Heart right ventricle (tissue), 16 donors: ENCODE measurements at regions of chr9 and their contacts with region 1.

Region 1: GRCh38 chr9:6584881-6585597 is 60.5 kb downstream of the GLDC start:
- DNase-seq: no peak
- ATAC-seq: no peak
- H3K4me3 ChIP-seq: no peak overlapping the region
- H3K27ac ChIP-seq: no peak overlapping the region
- H3K4me1 ChIP-seq: peaks cover 0 to 4% (median 0%) of the 10 kb centered on the region in 9 donors
- H3K27me3 ChIP-seq: peaks cover 0 to 5% (median 0%) of the 10 kb centered on the region in 7 donors
- CTCF ChIP-seq: peak in 8 of 9 donors; percentile 26 to 66 (median 56)

Region 2: DNA sequence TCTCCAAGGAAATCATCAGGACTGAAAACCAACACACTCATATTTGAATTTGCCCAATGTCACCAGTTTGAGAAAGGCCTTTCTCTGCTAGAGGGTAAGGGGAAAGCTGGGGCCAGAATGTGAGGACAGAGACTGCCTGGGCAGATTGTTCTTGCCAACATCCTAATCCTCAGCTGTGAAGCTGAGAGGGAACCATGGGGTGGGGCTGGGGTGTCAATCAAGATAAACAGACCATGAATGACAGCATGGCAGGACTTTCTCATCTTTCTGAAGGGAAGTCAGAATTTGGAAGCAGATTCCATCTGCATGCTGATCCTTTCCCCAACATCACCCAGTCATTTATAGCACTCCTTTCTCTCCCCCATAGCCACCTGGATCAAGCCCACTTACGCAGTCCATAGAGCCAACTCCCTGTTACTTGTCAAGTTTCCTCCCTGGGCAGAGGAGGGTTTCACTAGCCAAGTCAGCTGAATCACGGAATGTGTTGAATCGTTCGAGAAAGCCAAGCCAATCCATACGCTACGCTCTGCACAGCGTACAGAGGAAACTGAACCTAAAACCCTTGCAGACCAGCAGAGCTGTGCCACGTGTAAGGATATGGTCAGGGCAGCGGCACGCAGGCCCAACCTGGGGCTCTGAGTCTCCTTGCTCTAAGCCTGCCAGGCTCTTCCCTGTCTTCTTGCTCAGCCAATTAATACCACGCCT is 45.6 kb after region 1 on chr9:
- intact Hi-C with region 1: no loop called
- DNase-seq: no peak
- ATAC-seq: no peak
- H3K4me3 ChIP-seq: no peak overlapping the region
- H3K27ac ChIP-seq: no peak overlapping the region
- H3K4me1 ChIP-seq: no peaks in the 10 kb centered on the region
- H3K27me3 ChIP-seq: peaks cover 0 to 18% (median 12%) of the 10 kb centered on the region in 7 donors
- CTCF ChIP-seq: no peak

Region 3: GRCh38 chr9:6667633-6668280 is 82.7 kb after region 1 on chr9:
- intact Hi-C with region 1: loop called in 5 of 10 experiments (anchors 1 to 10 kb)
- DNase-seq: no peak
- ATAC-seq: no peak
- H3K4me3 ChIP-seq: no peak overlapping the region
- H3K27ac ChIP-seq: no peak overlapping the region
- H3K4me1 ChIP-seq: no peaks in the 10 kb centered on the region
- H3K27me3 ChIP-seq: no peaks in the 10 kb centered on the region
- CTCF ChIP-seq: peak in 7 of 9 donors; percentile 40 to 62 (median 52)

Region 4: GRCh38 chr9:6686396-6686795 is 101.4 kb after region 1 on chr9:
- intact Hi-C with region 1: loop called in 2 of 10 experiments (anchors 5 kb)
- DNase-seq: peak in 1 of 2 donors; percentile 23
- ATAC-seq: no peak
- H3K4me3 ChIP-seq: no peak overlapping the region
- H3K27ac ChIP-seq: no peak overlapping the region
- H3K4me1 ChIP-seq: peaks cover 0 to 36% (median 9%) of the 10 kb centered on the region in 9 donors
- H3K27me3 ChIP-seq: no peaks in the 10 kb centered on the region
- CTCF ChIP-seq: peak in 6 of 9 donors; percentile 13 to 50 (median 32)

Region 5: GRCh38 chr9:6739218-6739617 is 154.2 kb after region 1 on chr9:
- intact Hi-C with region 1: loop called in 7 of 10 experiments (anchors 5 to 10 kb)
- DNase-seq: no peak
- ATAC-seq: no peak
- H3K4me3 ChIP-seq: no peak overlapping the region
- H3K27ac ChIP-seq: no peak overlapping the region
- H3K4me1 ChIP-seq: no peaks in the 10 kb centered on the region
- H3K27me3 ChIP-seq: no peaks in the 10 kb centered on the region
- CTCF ChIP-seq: peak in 5 of 9 donors; percentile 32 to 47 (median 41)